CD8-positive, alpha-beta memory T cell (primary cell): ENCODE measurements at regions of chr22 and their contacts with region 1.

Region 1: DNA sequence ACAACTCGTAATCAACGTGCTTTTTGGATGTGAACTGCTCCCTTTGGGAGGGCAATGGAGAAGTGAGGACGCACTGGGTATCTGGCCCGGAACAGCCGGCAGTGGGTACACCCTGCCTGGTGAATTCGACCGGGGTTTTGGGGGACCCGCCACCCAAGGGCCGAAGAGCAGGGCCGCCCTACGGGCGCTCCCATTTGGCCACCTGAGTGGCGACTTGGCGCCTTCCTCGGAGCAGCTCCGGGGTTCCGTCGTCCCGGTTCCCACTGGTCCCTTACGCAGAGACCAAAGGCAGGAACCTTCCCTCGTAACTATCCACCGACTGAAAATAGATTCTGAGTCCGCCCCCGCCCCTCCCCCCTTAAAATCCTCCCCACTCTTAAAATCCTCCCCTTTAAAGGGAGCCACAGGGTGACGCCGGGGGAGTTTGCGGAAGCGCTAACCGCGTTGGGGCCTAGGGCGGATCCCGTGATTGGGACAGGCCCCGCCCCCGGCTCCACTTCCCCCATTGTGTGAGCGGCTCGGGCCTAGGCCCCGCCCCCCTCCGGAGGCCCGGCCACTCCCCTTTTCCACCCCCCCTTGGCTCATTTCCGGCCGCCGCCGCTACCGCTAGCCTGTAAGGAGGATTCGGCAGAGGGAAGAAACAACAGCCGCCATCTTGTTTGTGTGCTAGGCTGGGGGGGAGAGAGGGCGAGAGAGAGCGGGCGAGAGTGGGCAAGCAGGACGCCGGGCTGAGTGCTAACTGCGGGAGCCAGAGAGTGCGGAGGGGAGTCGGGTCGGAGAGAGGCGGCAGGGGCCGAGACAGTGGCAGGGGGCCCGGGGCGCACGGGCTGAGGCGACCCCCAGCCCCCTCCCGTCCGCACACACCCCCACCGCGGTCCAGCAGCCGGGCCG is 1.0 kb upstream of the EP300 start:
- DNase-seq: peak; percentile 98 to 100 (median 99)
- H3K4me3 ChIP-seq: peak overlapping the region; percentile 90
- H3K4me3 Mint-ChIP-seq: peak overlapping the region; percentile 91 to 99 (median 96)
- H3K27ac ChIP-seq: peak overlapping the region; percentile 93
- H3K27ac Mint-ChIP-seq: peak overlapping the region; percentile 94 to 99 (median 98)
- H3K4me1 ChIP-seq: peaks cover 18% of the 10 kb centered on the region
- H3K4me1 Mint-ChIP-seq: peaks cover 33 to 39% (median 35%) of the 10 kb centered on the region in 3 donors
- H3K27me3 ChIP-seq: no peaks in the 10 kb centered on the region
- H3K27me3 Mint-ChIP-seq: no peaks in the 10 kb centered on the region

Region 2: DNA sequence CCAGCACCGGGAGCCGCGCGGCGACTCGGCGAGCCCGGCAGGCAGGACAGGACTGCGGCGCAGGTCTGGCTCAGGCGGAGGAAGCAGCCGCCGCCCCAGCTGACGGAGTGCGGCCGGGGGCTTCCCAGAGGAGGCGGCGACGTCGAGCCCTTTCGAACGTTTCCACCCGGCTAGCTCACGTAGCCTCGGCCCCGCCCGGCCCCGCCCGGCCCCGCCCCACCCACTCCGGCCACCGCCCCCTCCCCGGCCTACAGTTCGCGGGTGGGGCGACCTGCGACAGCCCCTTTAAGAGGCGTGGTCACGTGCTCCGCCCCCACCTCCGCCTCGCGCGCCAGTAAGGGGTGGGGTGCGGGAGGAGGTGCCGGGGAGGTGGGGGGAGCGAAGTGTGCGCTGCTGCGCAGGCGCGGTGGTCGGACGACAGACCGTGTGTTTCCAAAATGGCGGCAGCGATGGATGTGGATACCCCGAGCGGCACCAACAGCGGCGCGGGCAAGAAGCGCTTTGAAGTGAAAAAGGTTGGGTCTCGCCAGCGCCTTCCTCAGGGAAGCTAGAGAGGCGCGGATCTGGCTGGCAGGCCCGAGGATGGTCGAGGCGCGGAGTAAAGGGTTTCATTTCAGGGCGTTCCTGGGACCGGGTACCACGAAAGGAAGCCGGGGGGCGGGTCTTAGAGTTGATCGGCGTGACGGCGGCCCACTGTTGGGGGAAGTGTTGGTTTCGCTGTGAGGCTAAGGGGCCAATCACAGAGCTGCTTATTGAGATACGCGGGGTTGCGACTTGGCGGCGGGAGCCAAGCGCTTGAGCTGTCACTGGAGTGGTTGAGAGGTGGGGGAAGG is 140.2 kb before region 1 on chr22 and contains the start of gene RBX1:
- CTCF ChIA-PET with region 1: interaction called, 10 read pairs
- POLR2A ChIA-PET with region 1: interaction called, 78 read pairs
- DNase-seq: peak; percentile 98 to 100 (median 99)
- H3K4me3 ChIP-seq: peak within 1 kb of the TSS; percentile 81
- H3K4me3 Mint-ChIP-seq: peak within 1 kb of the TSS; percentile 92 to 100 (median 98)
- H3K27ac ChIP-seq: peak within 1 kb of the TSS; percentile 98
- H3K27ac Mint-ChIP-seq: peak within 1 kb of the TSS; percentile 93 to 100 (median 99)
- H3K4me1 ChIP-seq: peaks cover 20% of the 10 kb centered on the region
- H3K4me1 Mint-ChIP-seq: peaks cover 31 to 48% (median 46%) of the 10 kb centered on the region in 3 donors
- H3K27me3 ChIP-seq: no peaks in the 10 kb centered on the region
- H3K27me3 Mint-ChIP-seq: peaks cover 0 to 6% of the 10 kb centered on the region in 2 donors
- total RNA-seq, gene RBX1: 88.3 to 88.8 TPM

Region 3: DNA sequence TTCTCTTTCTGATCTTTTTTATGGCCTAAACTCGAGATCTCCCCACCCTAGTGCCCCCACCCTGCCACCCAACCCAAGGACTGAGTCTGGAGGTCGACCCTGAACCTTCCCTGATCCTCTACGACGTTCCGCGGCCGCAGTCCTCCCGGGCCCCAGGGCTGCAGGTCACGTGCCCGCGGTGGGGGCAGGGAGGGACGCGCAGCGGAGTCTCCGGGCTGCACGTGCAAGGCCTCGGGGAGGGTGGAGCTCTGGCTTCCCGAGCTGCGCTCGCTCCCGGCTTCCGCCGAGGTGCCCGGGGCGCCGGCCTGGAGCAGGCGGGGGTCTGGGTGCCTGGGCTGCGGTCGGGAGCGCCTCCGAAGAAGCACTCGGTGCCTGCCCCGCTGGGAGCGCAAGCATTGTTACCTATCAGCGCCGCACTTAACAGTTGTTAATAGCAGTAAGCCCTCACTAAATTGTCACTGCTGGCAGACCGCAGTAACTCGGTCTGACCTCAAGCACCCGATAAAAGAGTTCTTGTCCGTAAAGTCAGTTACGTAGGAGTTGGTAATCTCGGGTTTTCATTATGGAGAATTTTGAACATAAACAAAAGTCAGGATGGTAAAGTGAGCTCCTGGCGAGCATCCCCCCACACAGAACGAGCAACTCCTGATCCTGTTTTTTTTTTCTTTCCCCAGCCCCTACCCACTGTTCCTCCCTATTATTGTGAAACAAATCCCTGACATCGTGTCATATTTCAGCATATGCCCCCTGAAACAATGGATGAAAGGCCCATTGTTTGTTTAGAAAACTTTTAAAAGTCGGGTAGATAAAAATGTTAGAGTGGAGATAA is 68.7 kb before region 1 on chr22:
- CTCF ChIA-PET with region 1: interaction called, 3 read pairs
- POLR2A ChIA-PET with region 1: interaction called, 12 read pairs
- DNase-seq: peak; percentile 62 to 85 (median 74)
- H3K4me3 ChIP-seq: peak overlapping the region; percentile 64
- H3K4me3 Mint-ChIP-seq: peak overlapping the region; percentile 81 to 91 (median 83)
- H3K27ac ChIP-seq: peak overlapping the region; percentile 59
- H3K27ac Mint-ChIP-seq: peak overlapping the region; percentile 69 to 92 (median 86)
- H3K4me1 ChIP-seq: peaks cover 13% of the 10 kb centered on the region
- H3K4me1 Mint-ChIP-seq: peaks cover 10 to 22% (median 21%) of the 10 kb centered on the region in 3 donors
- H3K27me3 ChIP-seq: no peaks in the 10 kb centered on the region
- H3K27me3 Mint-ChIP-seq: no peaks in the 10 kb centered on the region

Region 4: DNA sequence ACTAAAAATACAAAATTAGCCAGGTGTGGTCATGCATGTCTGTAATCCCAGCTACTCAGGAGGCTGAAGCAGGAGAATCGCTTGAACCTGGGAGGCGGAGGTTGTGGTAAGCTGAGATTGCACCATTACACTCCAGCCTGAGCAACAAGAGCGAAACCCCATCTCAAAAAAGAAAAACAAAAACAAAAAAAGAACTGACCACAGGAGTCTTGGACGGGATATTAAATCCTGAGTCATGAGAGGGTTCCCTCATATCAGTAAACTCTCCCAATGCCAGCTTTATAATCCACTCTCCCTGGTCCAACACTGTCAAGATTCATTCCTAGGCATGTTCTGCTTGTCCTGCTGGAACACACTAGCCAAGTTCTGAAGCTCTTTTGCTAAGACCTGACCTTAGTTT is 60.5 kb before region 1 on chr22:
- CTCF ChIA-PET with region 1: no interaction called
- POLR2A ChIA-PET with region 1: interaction called, 10 read pairs
- DNase-seq: no peak
- H3K4me3 ChIP-seq: no peak overlapping the region
- H3K4me3 Mint-ChIP-seq: no peak overlapping the region
- H3K27ac ChIP-seq: no peak overlapping the region
- H3K27ac Mint-ChIP-seq: no peak overlapping the region
- H3K4me1 ChIP-seq: no peaks in the 10 kb centered on the region
- H3K4me1 Mint-ChIP-seq: no peaks in the 10 kb centered on the region
- H3K27me3 ChIP-seq: no peaks in the 10 kb centered on the region
- H3K27me3 Mint-ChIP-seq: no peaks in the 10 kb centered on the region

Region 5: GRCh38 chr22:41106122-41106968 is 15.0 kb after region 1 on chr22:
- CTCF ChIA-PET with region 1: interaction called, 3 read pairs
- POLR2A ChIA-PET with region 1: interaction called, 10 read pairs
- DNase-seq: no peak
- H3K4me3 ChIP-seq: no peak overlapping the region
- H3K4me3 Mint-ChIP-seq: peak overlapping the region in 5 of 7 donors; percentile 5 to 65 (median 35)
- H3K27ac ChIP-seq: no peak overlapping the region
- H3K27ac Mint-ChIP-seq: peak overlapping the region; percentile 13 to 89 (median 72)
- H3K4me1 ChIP-seq: peaks cover 41% of the 10 kb centered on the region
- H3K4me1 Mint-ChIP-seq: peaks cover 58 to 86% (median 80%) of the 10 kb centered on the region in 3 donors
- H3K27me3 ChIP-seq: no peaks in the 10 kb centered on the region
- H3K27me3 Mint-ChIP-seq: no peaks in the 10 kb centered on the region